K562 (cell line): ENCODE measurements at regions of chr1 and their contacts with region 1.

Region 1: GRCh38 chr1:100459358-100460114 is 78.4 kb upstream of the GPR88 start:
- DNase-seq: peak in 3 of 4 experiments; percentile 38 to 76 (median 57)
- ATAC-seq: peak; percentile 89
- H3K4me3 ChIP-seq: no peak overlapping the region
- H3K27ac ChIP-seq: no peak overlapping the region
- H3K4me1 ChIP-seq: peaks cover 0 to 6% of the 10 kb centered on the region in 2 experiments; a peak in 3 of 5 replicates
- H3K27me3 ChIP-seq: no peaks in the 10 kb centered on the region
- CTCF ChIP-seq: peak; percentile 72 to 86 (median 84)
- EP300 ChIP-seq: no peak
- POLR2A ChIP-seq: no peak
- RAD21 ChIP-seq: peak; percentile 90 to 91

Region 2: GRCh38 chr1:99808391-99809115 is 651.0 kb before region 1 on chr1:
- CTCF ChIA-PET with region 1: interaction called, 12 read pairs
- POLR2A ChIA-PET with region 1: no interaction called
- in situ Hi-C with region 1: loop called (anchors 10 kb)
- intact Hi-C with region 1: loop called (anchors 1 kb)
- DNase-seq: peak; percentile 74 to 93 (median 82)
- ATAC-seq: peak; percentile 95
- H3K4me3 ChIP-seq: no peak overlapping the region
- H3K27ac ChIP-seq: peak overlapping the region; percentile 69
- H3K4me1 ChIP-seq: peaks cover 0 to 11% of the 10 kb centered on the region in 2 experiments; a peak in 2 of 5 replicates
- H3K27me3 ChIP-seq: no peaks in the 10 kb centered on the region
- CTCF ChIP-seq: peak; percentile 54 to 84 (median 70)
- EP300 ChIP-seq: peak; percentile 52
- POLR2A ChIP-seq: no peak
- RAD21 ChIP-seq: peak; percentile 94 to 95

Region 3: DNA sequence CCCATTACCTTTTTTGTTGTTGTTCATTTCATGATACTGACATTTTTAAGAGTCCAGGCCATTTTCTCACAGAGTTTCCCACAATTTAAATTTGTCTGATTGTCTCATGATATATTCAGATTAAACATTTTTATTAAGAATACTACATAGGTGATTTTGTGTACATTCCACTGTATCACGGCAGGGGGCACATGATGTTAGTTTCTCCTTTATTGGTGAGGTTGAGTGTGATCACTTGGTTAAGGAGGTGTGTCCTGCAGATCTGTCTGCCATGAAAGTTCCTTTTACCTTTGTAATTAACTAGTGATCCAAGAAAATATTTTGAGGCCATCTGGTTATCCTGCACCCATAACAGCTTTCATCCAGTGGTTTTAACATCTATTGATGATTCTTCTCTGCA is 181.7 kb before region 1 on chr1:
- CTCF ChIA-PET with region 1: no interaction called
- POLR2A ChIA-PET with region 1: no interaction called
- in situ Hi-C with region 1: no loop called
- intact Hi-C with region 1: loop called (anchors 5 kb)
- DNase-seq: peak in 2 of 4 experiments; percentile 21
- ATAC-seq: peak; percentile 72; the same call in 2 of the 3 replicates
- H3K4me3 ChIP-seq: no peak overlapping the region
- H3K27ac ChIP-seq: no peak overlapping the region
- H3K4me1 ChIP-seq: no peaks in the 10 kb centered on the region
- H3K27me3 ChIP-seq: no peaks in the 10 kb centered on the region
- CTCF ChIP-seq: peak; percentile 22 to 42 (median 22); a peak in 3 of 6 replicates
- EP300 ChIP-seq: no peak
- POLR2A ChIP-seq: no peak
- RAD21 ChIP-seq: peak in 1 of 2 experiments; percentile 47; a peak in 3 of 4 replicates

Region 4: GRCh38 chr1:100387209-100387608 is 72.3 kb before region 1 on chr1:
- CTCF ChIA-PET with region 1: no interaction called
- POLR2A ChIA-PET with region 1: no interaction called
- in situ Hi-C with region 1: no loop called
- intact Hi-C with region 1: loop called (anchors 5 kb)
- DNase-seq: no peak
- ATAC-seq: no peak
- H3K4me3 ChIP-seq: no peak overlapping the region
- H3K27ac ChIP-seq: no peak overlapping the region
- H3K4me1 ChIP-seq: peaks cover 5 to 7% of the 10 kb centered on the region in 2 experiments; a peak in 2 of 5 replicates
- H3K27me3 ChIP-seq: no peaks in the 10 kb centered on the region
- CTCF ChIP-seq: no peak
- EP300 ChIP-seq: no peak
- POLR2A ChIP-seq: no peak
- RAD21 ChIP-seq: no peak